Mucosa of descending colon (tissue), 3 donors: ENCODE measurements at regions of chr7 and their contacts with region 1.

Region 1: DNA sequence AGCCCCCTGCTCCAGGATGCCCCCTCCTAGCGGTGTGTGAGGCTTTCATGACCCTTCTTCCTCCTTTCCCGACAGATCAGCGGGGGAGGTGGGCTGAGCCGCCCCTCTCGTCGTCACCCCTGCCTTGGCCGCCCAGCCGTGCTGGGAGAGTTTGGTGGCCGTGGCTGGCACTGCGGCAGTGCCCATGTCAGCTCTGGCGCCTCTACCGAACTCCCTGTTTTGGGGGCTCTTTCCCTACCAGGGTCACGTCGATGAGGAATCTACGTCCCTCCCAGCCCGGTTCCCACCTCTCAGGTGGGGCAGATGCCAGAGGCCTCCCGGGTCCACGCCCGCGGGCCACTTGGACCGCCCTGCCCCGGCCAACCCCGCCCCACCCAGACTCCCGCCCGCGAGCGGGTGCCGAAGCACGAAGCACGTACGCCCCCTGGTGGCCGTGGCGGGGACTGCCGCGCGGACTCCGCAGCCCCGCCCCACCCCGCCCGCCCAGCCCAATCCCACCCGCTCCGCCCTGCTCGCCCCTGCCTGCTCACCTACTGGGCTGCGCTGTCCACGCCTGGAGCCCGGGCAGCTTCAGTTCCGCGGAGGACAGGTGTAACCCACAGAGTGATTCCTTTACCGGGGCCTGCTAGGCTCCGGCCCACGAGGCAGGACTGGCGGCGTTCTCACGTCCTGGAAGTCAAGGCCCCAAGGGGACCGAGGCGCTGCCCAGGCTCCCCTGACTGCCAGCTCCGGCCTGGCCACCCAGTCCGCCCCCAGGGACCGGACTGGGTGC is 127.1 kb downstream of the UBE2H start:
- DNase-seq: peak; percentile 92 to 95 (median 94)
- ATAC-seq: peak; percentile 93
- H3K4me3 ChIP-seq: no peak overlapping the region
- H3K4me1 ChIP-seq: peaks cover 21% of the 10 kb centered on the region
- CTCF ChIP-seq: peak; percentile 98

Region 2: GRCh38 chr7:129468087-129468486 is 357.6 kb before region 1 on chr7:
- intact Hi-C with region 1: no loop called
- DNase-seq: no peak
- ATAC-seq: no peak
- H3K4me3 ChIP-seq: no peak overlapping the region
- H3K4me1 ChIP-seq: no peaks in the 10 kb centered on the region
- CTCF ChIP-seq: no peak

Region 3: GRCh38 chr7:129707910-129708499 is 117.7 kb before region 1 on chr7:
- intact Hi-C with region 1: no loop called
- DNase-seq: no peak
- ATAC-seq: no peak
- H3K4me3 ChIP-seq: no peak overlapping the region
- H3K4me1 ChIP-seq: no peaks in the 10 kb centered on the region
- CTCF ChIP-seq: no peak

Region 4: DNA sequence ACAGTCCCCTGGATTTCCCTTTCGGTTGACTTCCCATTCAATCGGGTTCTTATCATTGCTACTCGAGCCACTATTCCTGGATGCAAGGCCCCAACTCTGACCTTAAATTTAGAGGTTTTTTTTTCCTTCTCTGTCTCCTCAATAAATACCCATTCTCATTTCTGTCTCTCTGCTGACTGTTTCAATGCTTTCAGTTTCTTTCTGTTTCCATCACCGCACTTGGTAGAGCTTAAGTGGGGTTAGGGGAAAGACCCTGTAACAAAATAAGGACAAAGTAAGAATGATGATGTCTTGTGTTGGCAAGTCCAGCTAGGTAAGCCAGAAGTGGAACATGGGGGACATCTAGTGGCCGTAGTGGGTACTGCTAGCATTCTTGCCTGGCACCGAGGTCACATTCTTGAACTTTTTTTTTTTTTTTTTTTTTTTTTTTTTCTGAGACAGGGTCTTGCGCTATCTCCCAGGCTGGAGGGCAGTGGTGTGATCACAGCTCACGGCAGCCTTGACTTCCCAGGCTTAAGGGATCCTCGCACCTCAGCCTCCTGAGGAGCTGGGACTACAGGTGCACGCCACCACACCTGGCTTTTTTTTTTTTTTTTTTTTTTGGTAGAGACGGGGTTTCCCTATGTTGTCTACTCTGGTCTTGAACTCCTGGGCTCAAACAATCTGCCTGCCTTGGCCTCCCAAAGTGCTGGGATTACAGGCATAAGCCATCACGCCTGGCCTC is 185.2 kb after region 1 on chr7:
- intact Hi-C with region 1: loop called in 1 of 2 experiments (anchors 10 kb)
- DNase-seq: peak in 2 of 3 donors; percentile 74 to 98
- ATAC-seq: peak; percentile 78
- H3K4me3 ChIP-seq: no peak overlapping the region
- H3K4me1 ChIP-seq: no peaks in the 10 kb centered on the region
- CTCF ChIP-seq: peak; percentile 84